Activated CD4-positive, alpha-beta T cell treated with anti-CD3 and anti-CD28 coated beads for 36 hours (primary cell): ENCODE measurements at regions of chr2 and their contacts with region 1.

Region 1: GRCh38 chr2:15177103-15177502 is 384.0 kb downstream of the NBAS start:
- DNase-seq: peak; percentile 84
- ATAC-seq: peak; percentile 94
- H3K4me3 Mint-ChIP-seq: no peak overlapping the region
- H3K27ac Mint-ChIP-seq: peak overlapping the region; percentile 47
- H3K4me1 Mint-ChIP-seq: peaks cover 50% of the 10 kb centered on the region
- H3K27me3 Mint-ChIP-seq: peaks cover 28% of the 10 kb centered on the region

Region 2: DNA sequence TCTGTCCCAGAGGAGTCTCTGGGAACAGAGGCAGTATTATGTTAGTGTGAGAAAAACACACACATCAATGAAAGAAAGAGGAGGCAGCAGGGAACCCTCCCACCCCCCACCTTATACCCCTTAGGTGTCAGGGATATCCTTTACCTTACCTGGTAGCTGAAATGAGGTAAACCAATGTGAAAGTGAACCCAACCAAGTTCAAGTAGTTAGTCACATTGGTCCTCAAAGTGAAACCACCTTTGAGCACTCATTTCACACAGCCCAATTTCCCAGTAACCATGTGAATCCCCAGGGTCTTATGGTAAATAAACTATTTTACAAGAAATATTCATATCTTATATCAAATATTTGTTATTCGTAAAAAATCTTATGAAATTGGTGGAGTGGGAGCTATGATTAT is 166.8 kb before region 1 on chr2:
- CTCF ChIA-PET with region 1: no interaction called
- POLR2A ChIA-PET with region 1: no interaction called
- intact Hi-C with region 1: loop called in 1 of 2 experiments (anchors 1 kb)
- DNase-seq: no peak
- ATAC-seq: no peak
- H3K4me3 Mint-ChIP-seq: no peak overlapping the region
- H3K27ac Mint-ChIP-seq: no peak overlapping the region
- H3K4me1 Mint-ChIP-seq: peaks cover 4% of the 10 kb centered on the region
- H3K27me3 Mint-ChIP-seq: peaks cover 10% of the 10 kb centered on the region

Region 3: GRCh38 chr2:15189216-15189615 is 12.1 kb after region 1 on chr2:
- CTCF ChIA-PET with region 1: no interaction called
- POLR2A ChIA-PET with region 1: no interaction called
- intact Hi-C with region 1: no loop called
- DNase-seq: no peak
- ATAC-seq: no peak
- H3K4me3 Mint-ChIP-seq: no peak overlapping the region
- H3K27ac Mint-ChIP-seq: no peak overlapping the region
- H3K4me1 Mint-ChIP-seq: peaks cover 4% of the 10 kb centered on the region
- H3K27me3 Mint-ChIP-seq: no peaks in the 10 kb centered on the region

Region 4: DNA sequence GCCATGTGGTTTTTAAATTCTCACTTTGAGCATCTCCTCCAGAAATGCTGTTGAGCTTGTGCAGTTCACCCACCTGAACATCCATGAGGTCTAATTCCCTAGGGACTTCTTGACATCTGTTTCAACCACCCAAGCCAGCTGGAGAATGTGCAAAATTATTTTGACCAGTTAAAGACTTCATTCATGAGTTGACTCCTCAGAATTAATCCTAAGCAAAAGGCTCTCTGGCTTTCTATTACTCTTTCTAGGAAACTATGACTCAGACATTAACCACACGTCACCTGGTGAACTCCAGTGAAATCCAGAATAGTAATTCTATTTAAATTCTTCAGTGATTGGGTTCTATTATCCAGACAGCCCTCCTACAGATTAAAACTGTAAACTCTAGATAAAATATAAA is 136.6 kb after region 1 on chr2:
- CTCF ChIA-PET with region 1: no interaction called
- POLR2A ChIA-PET with region 1: no interaction called
- intact Hi-C with region 1: loop called in 1 of 2 experiments (anchors 1 kb)
- DNase-seq: no peak
- ATAC-seq: peak; percentile 68
- H3K4me3 Mint-ChIP-seq: no peak overlapping the region
- H3K27ac Mint-ChIP-seq: no peak overlapping the region
- H3K4me1 Mint-ChIP-seq: peaks cover 24% of the 10 kb centered on the region
- H3K27me3 Mint-ChIP-seq: no peaks in the 10 kb centered on the region

Region 5: DNA sequence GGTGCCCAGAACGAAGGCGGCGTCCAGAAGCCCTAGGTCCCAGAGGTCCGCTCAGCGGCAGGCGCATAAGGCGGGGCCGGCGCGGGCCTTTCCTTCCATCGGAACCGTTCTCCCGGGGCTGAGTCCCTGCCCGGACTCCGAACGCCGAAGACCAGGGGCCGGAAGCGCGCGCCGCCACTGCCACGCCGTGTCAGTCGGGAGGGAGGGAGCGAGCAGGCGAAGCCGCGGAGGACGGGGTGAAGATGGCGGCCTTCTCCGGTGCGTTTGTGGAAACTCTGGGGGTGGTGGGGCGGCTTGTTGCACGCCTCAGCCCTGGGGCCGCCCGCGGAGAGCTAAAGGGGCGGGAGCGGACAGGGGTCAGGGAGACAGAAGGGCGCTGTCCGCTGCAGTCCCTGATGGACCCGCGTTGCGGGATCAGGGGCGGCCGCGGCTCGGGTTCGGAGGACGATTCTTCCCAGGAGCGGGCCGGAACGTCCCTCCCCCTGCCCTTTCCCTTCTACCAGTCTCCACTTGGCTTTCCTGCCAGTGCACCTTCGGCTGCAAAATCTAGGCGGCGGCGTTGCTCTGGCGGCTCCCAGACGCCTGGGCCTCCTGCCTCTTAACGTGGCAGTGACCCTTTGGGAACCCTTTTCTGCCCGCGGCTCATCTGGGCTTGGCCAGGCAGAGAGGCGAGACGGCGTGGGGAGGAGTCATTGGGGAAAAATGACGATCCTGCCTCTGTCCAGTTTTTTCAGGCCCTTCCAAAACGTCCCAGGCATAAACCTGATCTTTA is 414.8 kb after region 1 on chr2 and contains the start of gene DDX1:
- CTCF ChIA-PET with region 1: no interaction called
- POLR2A ChIA-PET with region 1: no interaction called
- intact Hi-C with region 1: loop called in 1 of 2 experiments (anchors 1 kb)
- DNase-seq: peak; percentile 92
- ATAC-seq: peak; percentile 94
- H3K4me3 Mint-ChIP-seq: peak within 1 kb of the TSS; percentile 90
- H3K27ac Mint-ChIP-seq: peak within 1 kb of the TSS; percentile 98
- H3K4me1 Mint-ChIP-seq: peaks cover 36% of the 10 kb centered on the region
- H3K27me3 Mint-ChIP-seq: no peaks in the 10 kb centered on the region
- total RNA-seq, gene DDX1: 87.6 to 96.2 TPM

Region 6: GRCh38 chr2:16727256-16727655 is 1550.2 kb after region 1 on chr2:
- CTCF ChIA-PET with region 1: no interaction called
- POLR2A ChIA-PET with region 1: no interaction called
- intact Hi-C with region 1: loop called in 1 of 2 experiments (anchors 10 kb)
- DNase-seq: no peak
- ATAC-seq: no peak
- H3K4me3 Mint-ChIP-seq: no peak overlapping the region
- H3K27ac Mint-ChIP-seq: no peak overlapping the region
- H3K4me1 Mint-ChIP-seq: peaks cover 47% of the 10 kb centered on the region
- H3K27me3 Mint-ChIP-seq: peaks cover 17% of the 10 kb centered on the region